Activated CD4-positive, alpha-beta T cell treated with anti-CD3 and anti-CD28 coated beads, Interleukin-2, amount 10 ng/mL, durations not matched to agents 24 days and 14 days (primary cell): ENCODE measurements at regions of chr18 and their contacts with region 1.

Region 1: GRCh38 chr18:3062798-3063680 is 50.1 kb upstream of the LPIN2 start:
- DNase-seq: peak; percentile 93
- H3K4me3 Mint-ChIP-seq: peak overlapping the region; percentile 62
- H3K27ac Mint-ChIP-seq: peak overlapping the region; percentile 79
- H3K4me1 Mint-ChIP-seq: peaks cover 66% of the 10 kb centered on the region
- H3K27me3 Mint-ChIP-seq: no peaks in the 10 kb centered on the region

Region 2: DNA sequence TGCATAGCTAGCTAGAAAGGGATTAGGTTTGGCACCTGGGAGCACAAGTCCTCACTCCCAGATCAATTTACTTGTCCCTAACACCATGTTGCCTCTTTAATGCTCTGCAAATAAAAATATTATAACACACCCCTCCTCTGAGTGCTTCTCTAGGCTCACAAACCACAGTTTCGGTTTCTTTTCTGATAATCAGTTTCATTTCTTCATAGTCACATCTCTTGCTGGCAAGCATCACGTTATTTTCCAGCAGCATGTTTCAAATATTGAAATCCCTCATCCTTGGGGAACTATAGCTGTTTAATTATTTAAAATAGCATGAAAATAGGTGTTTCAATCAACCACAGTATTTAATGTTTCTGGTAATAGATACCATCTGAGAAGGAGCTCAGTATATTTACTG is 421.4 kb before region 1 on chr18:
- intact Hi-C with region 1: loop called (anchors 5 kb)
- DNase-seq: peak; percentile 75
- H3K4me3 Mint-ChIP-seq: peak overlapping the region; percentile 70
- H3K27ac Mint-ChIP-seq: peak overlapping the region; percentile 87
- H3K4me1 Mint-ChIP-seq: peaks cover 43% of the 10 kb centered on the region
- H3K27me3 Mint-ChIP-seq: no peaks in the 10 kb centered on the region

Region 3: GRCh38 chr18:2994603-2995432 is 68.2 kb before region 1 on chr18:
- intact Hi-C with region 1: loop called (anchors 1 kb)
- DNase-seq: peak; percentile 92
- H3K4me3 Mint-ChIP-seq: peak overlapping the region; percentile 75
- H3K27ac Mint-ChIP-seq: peak overlapping the region; percentile 93
- H3K4me1 Mint-ChIP-seq: peaks cover 76% of the 10 kb centered on the region
- H3K27me3 Mint-ChIP-seq: no peaks in the 10 kb centered on the region

Region 4: GRCh38 chr18:3037423-3037915 is 25.6 kb before region 1 on chr18:
- intact Hi-C with region 1: loop called (anchors 1 kb)
- DNase-seq: peak; percentile 82
- H3K4me3 Mint-ChIP-seq: peak overlapping the region; percentile 49
- H3K27ac Mint-ChIP-seq: peak overlapping the region; percentile 82
- H3K4me1 Mint-ChIP-seq: peaks cover 25% of the 10 kb centered on the region
- H3K27me3 Mint-ChIP-seq: no peaks in the 10 kb centered on the region

Region 5: DNA sequence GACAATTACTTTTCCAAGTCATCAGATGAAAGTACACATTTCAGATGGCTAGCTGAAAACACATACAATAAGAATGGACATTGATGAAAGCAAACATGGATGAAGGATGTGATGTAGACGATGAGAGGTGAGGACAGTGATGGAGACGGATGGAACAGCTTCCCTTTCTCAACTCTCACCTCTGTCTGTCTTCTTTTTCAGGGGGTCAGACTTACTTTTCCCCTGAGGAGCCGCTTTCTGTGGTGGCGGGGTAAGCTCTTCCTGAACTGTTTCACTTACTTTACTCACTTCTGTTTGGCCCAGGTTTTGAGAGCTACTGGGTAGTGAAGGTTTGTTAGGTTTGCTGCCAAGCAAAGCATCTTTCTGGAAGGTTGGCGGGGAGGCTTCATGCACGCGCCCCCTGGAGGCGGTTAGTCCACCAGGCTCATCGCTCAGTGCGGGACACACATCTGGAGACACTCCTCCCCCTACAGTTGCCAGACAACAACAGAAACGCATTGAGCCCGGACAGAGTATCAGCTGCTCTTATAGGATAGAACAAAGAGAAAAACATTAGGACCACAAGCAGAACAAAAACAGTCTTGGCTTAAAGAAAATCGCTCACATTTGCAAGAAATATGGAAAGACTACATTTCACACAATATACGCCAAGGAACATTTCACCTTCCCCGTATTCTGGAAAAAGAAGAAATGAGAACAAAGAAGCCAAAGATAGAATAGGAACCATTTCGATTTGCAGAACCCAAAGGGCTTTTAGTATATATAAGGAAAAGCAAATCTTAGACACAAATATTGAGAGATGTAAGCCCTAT is 66.2 kb after region 1 on chr18:
- intact Hi-C with region 1: loop called (anchors 2 kb)
- DNase-seq: peak; percentile 94
- H3K4me3 Mint-ChIP-seq: peak overlapping the region; percentile 10
- H3K27ac Mint-ChIP-seq: no peak overlapping the region
- H3K4me1 Mint-ChIP-seq: peaks cover 9% of the 10 kb centered on the region
- H3K27me3 Mint-ChIP-seq: no peaks in the 10 kb centered on the region

Region 6: GRCh38 chr18:3985664-3986063 is 922.6 kb after region 1 on chr18:
- intact Hi-C with region 1: no loop called
- DNase-seq: no peak
- H3K4me3 Mint-ChIP-seq: no peak overlapping the region
- H3K27ac Mint-ChIP-seq: no peak overlapping the region
- H3K4me1 Mint-ChIP-seq: peaks cover 14% of the 10 kb centered on the region
- H3K27me3 Mint-ChIP-seq: no peaks in the 10 kb centered on the region